ENCODE measurements at regions of chr11 and their contacts with region 1.

Region 1: GRCh38 chr11:506238-506994 is 626 bp downstream of the RNH1 start:
- DNase-seq: peak; percentile 95 to 98 (median 97)
- ATAC-seq: peak; percentile 79
- H3K4me3 ChIP-seq: peak overlapping the region; percentile 99
- H3K4me3 Mint-ChIP-seq: peak overlapping the region; percentile 93 to 99 (median 96)
- H3K27ac ChIP-seq: peak overlapping the region; percentile 99
- H3K27ac Mint-ChIP-seq: peak overlapping the region; percentile 98 to 100 (median 99)
- H3K4me1 ChIP-seq: peaks cover 12 to 26% of the 10 kb centered on the region in 2 donors
- H3K4me1 Mint-ChIP-seq: peaks cover 5 to 34% (median 21%) of the 10 kb centered on the region in 7 donors
- H3K27me3 ChIP-seq: no peaks in the 10 kb centered on the region
- H3K27me3 Mint-ChIP-seq: no peaks in the 10 kb centered on the region

Region 2: GRCh38 chr11:249062-249461 is 257.4 kb before region 1 on chr11:
- CTCF ChIA-PET with region 1: no interaction called
- POLR2A ChIA-PET with region 1: no interaction called
- intact Hi-C with region 1: no loop called
- DNase-seq: no peak
- ATAC-seq: no peak
- H3K4me3 ChIP-seq: no peak overlapping the region
- H3K4me3 Mint-ChIP-seq: peak overlapping the region in 1 of 10 donors; percentile 39
- H3K27ac ChIP-seq: peak overlapping the region; percentile 24
- H3K27ac Mint-ChIP-seq: peak overlapping the region in 3 of 9 donors; percentile 31 to 89 (median 70)
- H3K4me1 ChIP-seq: peaks cover 0 to 3% of the 10 kb centered on the region in 2 donors
- H3K4me1 Mint-ChIP-seq: peaks cover 13 to 19% (median 15%) of the 10 kb centered on the region in 7 donors
- H3K27me3 ChIP-seq: no peaks in the 10 kb centered on the region
- H3K27me3 Mint-ChIP-seq: no peaks in the 10 kb centered on the region

Region 3: DNA sequence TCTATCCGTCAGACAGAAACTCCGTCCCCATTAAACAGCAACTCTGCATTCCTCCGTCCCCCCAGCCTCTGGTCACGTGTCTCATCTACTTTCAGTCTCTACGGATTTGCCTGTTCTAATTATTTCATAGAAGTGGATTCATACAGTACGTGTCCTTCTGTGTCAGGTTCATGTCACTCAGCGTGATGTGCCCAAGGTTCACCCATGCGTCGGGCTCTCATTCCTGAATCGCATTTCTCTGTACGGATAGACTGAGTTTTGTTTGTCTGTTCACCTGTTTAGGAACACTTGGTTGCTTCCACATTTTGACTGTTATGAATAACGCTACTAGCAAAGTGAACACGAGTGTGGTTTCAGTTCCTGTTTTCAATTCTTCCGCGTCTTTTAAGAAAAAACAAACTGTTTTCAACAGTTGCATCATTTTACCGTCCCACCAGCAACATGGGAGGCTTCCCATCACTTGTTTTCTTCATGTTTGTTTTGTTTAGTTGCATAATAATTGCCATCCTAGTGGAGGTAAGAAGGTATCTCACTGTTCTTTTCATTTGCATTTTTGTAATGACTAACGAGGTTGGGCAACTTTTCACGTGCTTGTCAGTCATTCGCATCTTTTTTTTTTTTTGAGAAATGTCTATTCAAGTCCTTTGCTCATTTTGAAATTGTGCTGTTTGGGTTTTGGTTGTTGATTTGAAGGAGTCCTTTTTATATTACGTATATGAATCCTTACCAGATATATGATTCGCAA is 237.1 kb before region 1 on chr11:
- CTCF ChIA-PET with region 1: no interaction called
- POLR2A ChIA-PET with region 1: interaction called, 6 read pairs
- intact Hi-C with region 1: loop called in 1 of 2 experiments (anchors 1 kb)
- DNase-seq: peak; percentile 43 to 95 (median 88)
- ATAC-seq: peak; percentile 84
- H3K4me3 ChIP-seq: peak overlapping the region; percentile 59
- H3K4me3 Mint-ChIP-seq: peak overlapping the region; percentile 85 to 96 (median 90)
- H3K27ac ChIP-seq: peak overlapping the region; percentile 80
- H3K27ac Mint-ChIP-seq: peak overlapping the region; percentile 92 to 100 (median 99)
- H3K4me1 ChIP-seq: peaks cover 24 to 26% of the 10 kb centered on the region in 2 donors
- H3K4me1 Mint-ChIP-seq: peaks cover 20 to 47% (median 35%) of the 10 kb centered on the region in 7 donors
- H3K27me3 ChIP-seq: no peaks in the 10 kb centered on the region
- H3K27me3 Mint-ChIP-seq: peaks cover 0 to 8% (median 0%) of the 10 kb centered on the region in 5 donors

Region 4: DNA sequence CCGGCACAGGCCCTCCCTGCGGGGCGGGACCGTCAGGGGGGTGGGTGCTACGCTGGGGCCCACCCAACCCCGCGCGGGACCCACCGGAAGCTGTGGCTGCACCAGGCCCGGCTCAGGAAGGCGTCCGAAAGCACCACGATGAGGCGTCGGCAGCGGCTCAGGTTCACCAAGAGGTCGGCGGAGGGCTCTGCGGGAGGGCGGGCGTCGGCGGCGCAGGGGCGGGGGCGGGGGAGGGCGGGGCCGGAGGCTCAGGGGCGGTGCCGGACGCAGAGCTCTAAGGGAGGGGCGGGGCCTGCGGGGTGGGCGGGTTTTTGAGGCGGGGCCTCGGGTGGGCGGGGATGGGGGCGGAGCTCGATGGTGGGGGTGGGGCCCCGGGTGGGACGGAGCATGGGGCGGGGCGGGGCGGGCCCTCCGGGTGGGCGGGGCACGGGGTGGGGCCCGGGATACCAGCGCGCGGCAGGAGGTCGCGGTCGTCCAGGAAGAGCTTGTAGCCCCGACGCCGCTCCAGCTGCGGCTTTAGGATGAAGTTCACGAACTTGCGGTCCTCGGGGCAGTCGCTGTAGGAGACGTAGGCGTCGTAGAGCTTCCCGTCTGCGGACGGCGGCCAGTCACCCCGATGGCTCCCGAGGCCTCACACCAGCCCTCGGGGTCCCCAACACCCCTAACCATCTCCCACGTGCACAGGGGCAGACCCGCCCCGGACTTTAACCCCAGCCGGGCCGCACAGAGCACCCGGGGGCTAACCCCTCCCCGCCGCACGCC is 99.3 kb before region 1 on chr11:
- CTCF ChIA-PET with region 1: no interaction called
- POLR2A ChIA-PET with region 1: interaction called, 9 read pairs
- intact Hi-C with region 1: loop called (anchors 1 kb)
- DNase-seq: peak; percentile 80 to 93 (median 92)
- ATAC-seq: peak; percentile 90
- H3K4me3 ChIP-seq: no peak overlapping the region
- H3K4me3 Mint-ChIP-seq: peak overlapping the region in 6 of 10 donors; percentile 12 to 60 (median 38)
- H3K27ac ChIP-seq: peak overlapping the region; percentile 75
- H3K27ac Mint-ChIP-seq: peak overlapping the region in 7 of 9 donors; percentile 21 to 85 (median 51)
- H3K4me1 ChIP-seq: peaks cover 9 to 13% of the 10 kb centered on the region in 2 donors
- H3K4me1 Mint-ChIP-seq: peaks cover 4 to 21% (median 6%) of the 10 kb centered on the region in 7 donors
- H3K27me3 ChIP-seq: no peaks in the 10 kb centered on the region
- H3K27me3 Mint-ChIP-seq: no peaks in the 10 kb centered on the region

Region 5: DNA sequence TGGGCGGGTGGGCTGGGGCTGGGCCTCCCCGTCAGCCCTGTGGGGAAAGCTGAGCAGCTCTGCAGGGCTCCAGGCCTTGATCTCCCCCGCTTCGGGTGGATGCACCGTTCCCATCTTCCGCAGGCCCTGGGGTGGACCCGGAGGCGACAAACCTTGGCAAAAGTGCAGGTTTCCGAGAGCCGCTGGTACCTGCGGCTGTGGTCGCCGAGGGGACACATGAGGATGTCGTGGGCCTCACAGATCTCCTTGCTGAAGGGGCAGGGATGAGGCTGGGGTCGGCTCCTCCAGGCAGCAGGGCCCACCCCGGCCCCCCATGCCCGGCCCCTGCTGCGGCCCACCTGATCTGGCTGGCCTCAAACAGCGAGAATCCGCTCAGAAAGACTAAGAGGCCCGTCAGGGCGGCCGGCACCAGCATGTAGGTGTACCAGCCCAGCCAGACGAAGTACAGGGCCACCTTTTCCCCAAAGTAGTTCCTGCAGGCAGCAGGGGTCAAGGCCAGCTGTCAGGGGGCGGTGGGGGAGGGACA is 76.4 kb before region 1 on chr11:
- CTCF ChIA-PET with region 1: no interaction called
- POLR2A ChIA-PET with region 1: no interaction called
- intact Hi-C with region 1: no loop called
- DNase-seq: peak in 1 of 9 donors; percentile 7
- ATAC-seq: no peak
- H3K4me3 ChIP-seq: no peak overlapping the region
- H3K4me3 Mint-ChIP-seq: no peak overlapping the region
- H3K27ac ChIP-seq: no peak overlapping the region
- H3K27ac Mint-ChIP-seq: no peak overlapping the region
- H3K4me1 ChIP-seq: no peaks in the 10 kb centered on the region
- H3K4me1 Mint-ChIP-seq: no peaks in the 10 kb centered on the region
- H3K27me3 ChIP-seq: no peaks in the 10 kb centered on the region
- H3K27me3 Mint-ChIP-seq: no peaks in the 10 kb centered on the region

Region 6: DNA sequence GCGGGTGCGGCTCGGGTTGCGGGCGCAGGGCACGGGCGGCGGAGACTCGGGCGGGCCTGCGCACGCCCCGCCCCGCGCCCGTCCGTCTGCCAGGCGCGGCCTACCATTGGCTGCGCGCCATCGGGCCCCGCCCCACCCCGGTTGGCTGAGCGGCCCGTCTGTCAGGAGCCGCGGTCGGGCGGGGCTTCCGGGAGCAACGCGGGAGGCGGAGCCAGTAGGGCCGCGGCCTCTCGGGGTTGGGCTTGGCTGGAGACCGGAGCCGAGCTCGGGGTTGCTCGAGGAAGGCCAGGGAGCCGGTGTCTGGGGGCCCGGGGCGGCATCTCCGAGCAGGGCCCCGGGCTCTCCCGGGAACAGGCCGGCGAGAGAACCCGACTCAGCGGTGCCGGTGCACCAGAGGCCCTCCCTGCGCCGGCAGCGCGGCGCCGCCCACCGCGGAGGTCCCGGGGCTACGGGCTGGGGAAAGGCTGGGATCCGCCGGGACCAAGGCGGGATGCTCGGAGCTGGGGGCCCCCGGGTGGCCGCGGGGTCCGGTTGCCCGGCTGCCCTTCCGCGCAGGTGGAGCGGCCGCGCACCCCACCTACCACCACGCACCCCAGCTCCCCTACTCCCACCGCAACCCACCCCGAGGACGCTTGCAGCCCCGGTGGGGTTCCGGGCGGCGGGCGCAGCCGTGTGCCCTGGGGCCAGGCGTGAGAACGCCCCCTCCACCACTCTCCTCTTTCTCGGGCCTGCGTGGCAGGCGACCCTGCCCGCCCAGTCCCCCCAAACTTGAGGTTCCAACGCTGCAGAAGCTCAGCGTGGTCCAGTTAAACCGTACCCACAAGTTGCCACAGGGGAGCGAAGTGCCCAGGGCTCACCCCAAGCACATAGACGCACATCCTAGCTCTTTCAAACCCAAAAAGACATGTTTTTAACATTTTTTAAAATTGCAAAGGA is 29.4 kb after region 1 on chr11 and contains the start of gene HRAS:
- CTCF ChIA-PET with region 1: no interaction called
- POLR2A ChIA-PET with region 1: interaction called, 26 read pairs
- intact Hi-C with region 1: loop called (anchors 1 kb)
- DNase-seq: peak; percentile 92 to 99 (median 96)
- ATAC-seq: peak; percentile 93
- H3K4me3 ChIP-seq: peak within 1 kb of the TSS; percentile 66
- H3K4me3 Mint-ChIP-seq: peak within 1 kb of the TSS; percentile 87 to 97 (median 91)
- H3K27ac ChIP-seq: peak within 1 kb of the TSS; percentile 75
- H3K27ac Mint-ChIP-seq: peak within 1 kb of the TSS; percentile 84 to 96 (median 91)
- H3K4me1 ChIP-seq: peaks cover 20 to 21% of the 10 kb centered on the region in 2 donors
- H3K4me1 Mint-ChIP-seq: peaks cover 5 to 16% (median 11%) of the 10 kb centered on the region in 7 donors
- H3K27me3 ChIP-seq: no peaks in the 10 kb centered on the region
- H3K27me3 Mint-ChIP-seq: no peaks in the 10 kb centered on the region
- total RNA-seq, gene HRAS: 22.3 to 52.0 (median 31.9) TPM

Region 7: DNA sequence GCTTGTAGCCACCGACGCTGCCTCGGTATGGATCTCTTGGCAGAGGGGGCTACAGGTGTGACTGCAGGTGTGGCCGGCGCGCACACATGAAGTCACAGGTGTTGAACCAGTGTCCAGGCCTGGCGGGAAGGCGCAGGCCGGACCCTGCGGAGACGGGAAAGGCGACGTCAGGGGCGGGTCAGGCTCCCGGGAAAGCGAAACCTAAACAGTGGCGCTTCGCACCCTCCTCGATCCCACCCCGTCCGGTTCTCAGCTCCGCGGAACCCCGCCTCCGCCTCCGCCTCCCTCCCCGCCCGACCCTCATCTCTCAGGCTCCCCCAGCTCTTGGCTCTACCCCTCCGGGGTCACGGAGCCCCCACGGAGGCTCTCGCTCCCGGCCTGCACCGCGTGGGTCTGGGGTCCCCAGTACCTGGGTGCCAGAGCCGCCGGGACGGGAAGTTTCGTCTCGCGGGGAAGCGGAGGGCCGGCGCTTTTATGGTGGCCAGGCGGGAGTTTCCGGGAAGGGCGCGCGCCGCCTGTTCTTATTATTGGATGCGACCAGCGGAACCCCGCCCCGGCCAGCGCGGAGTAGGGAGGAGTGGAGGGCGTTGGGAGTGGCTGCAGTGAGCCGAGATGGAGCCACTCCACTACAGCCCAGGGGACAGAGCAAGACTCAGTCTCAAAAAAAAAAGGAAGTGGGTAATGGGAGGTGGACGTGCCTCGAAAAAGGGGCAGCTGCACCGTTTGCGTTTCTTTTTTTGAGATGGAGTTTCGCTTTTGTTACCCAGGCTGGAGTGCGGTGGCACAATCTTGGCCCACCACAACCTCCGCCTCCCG is 109.3 kb after region 1 on chr11 and contains the start of gene IRF7:
- CTCF ChIA-PET with region 1: no interaction called
- POLR2A ChIA-PET with region 1: interaction called, 6 read pairs
- intact Hi-C with region 1: loop called (anchors 1 kb)
- DNase-seq: peak; percentile 70 to 91 (median 76)
- ATAC-seq: peak; percentile 91
- H3K4me3 ChIP-seq: peak within 1 kb of the TSS; percentile 97
- H3K4me3 Mint-ChIP-seq: peak within 1 kb of the TSS; percentile 80 to 94 (median 92)
- H3K27ac ChIP-seq: peak within 1 kb of the TSS; percentile 95
- H3K27ac Mint-ChIP-seq: peak within 1 kb of the TSS; percentile 83 to 97 (median 93)
- H3K4me1 ChIP-seq: peaks cover 8 to 22% of the 10 kb centered on the region in 2 donors
- H3K4me1 Mint-ChIP-seq: peaks cover 0 to 22% (median 15%) of the 10 kb centered on the region in 7 donors
- H3K27me3 ChIP-seq: no peaks in the 10 kb centered on the region
- H3K27me3 Mint-ChIP-seq: no peaks in the 10 kb centered on the region
- total RNA-seq, gene IRF7: 57.0 to 134 (median 64.6) TPM

Region 8: DNA sequence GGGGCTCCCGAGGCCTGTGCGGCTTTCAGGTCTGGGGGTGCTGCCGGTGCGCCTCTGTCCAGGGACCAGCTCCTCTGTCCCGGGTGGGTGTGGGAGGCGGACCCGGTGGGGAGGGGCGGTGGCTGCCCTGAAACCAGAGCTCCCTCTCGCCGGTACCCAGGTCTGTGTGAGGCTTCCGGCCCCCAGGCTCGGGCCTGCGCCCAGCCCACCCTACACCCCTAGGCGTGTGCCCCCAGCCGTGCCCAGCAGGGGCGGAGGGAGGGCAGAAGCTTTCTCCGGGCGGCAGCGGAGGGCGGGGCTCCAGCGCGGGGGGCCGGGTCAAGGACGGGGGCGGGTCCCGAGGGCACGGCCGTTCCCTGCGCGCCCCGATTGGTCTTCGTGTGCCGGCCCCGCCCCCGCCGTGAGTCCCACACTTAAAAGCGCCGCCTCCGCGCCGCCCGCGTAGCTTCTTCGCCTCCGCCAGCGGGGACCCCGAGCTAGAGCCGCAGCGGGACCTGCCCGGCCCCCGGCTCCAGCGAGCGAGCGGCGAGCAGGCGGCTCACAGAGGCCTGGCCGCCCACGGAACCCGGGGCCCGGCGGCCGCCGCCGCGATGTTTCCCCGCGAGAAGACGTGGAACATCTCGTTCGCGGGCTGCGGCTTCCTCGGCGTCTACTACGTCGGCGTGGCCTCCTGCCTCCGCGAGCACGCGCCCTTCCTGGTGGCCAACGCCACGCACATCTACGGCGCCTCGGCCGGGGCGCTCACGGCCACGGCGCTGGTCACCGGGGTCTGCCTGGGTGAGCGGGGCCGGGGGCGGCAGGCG is 312.9 kb after region 1 on chr11:
- CTCF ChIA-PET with region 1: no interaction called
- POLR2A ChIA-PET with region 1: interaction called, 4 read pairs
- intact Hi-C with region 1: loop called in 1 of 2 experiments (anchors 1 kb)
- DNase-seq: peak; percentile 85 to 95 (median 92)
- ATAC-seq: peak; percentile 86
- H3K4me3 ChIP-seq: peak overlapping the region; percentile 86
- H3K4me3 Mint-ChIP-seq: peak overlapping the region; percentile 82 to 92 (median 86)
- H3K27ac ChIP-seq: peak overlapping the region; percentile 91
- H3K27ac Mint-ChIP-seq: peak overlapping the region in 7 of 9 donors; percentile 67 to 93 (median 86)
- H3K4me1 ChIP-seq: peaks cover 12 to 15% of the 10 kb centered on the region in 2 donors
- H3K4me1 Mint-ChIP-seq: peaks cover 0 to 24% (median 13%) of the 10 kb centered on the region in 7 donors
- H3K27me3 ChIP-seq: no peaks in the 10 kb centered on the region
- H3K27me3 Mint-ChIP-seq: no peaks in the 10 kb centered on the region

Region 9: GRCh38 chr11:1515082-1516060 is 1009.0 kb after region 1 on chr11:
- CTCF ChIA-PET with region 1: no interaction called
- POLR2A ChIA-PET with region 1: no interaction called
- intact Hi-C with region 1: no loop called
- DNase-seq: peak; percentile 37 to 79 (median 61)
- ATAC-seq: peak; percentile 86
- H3K4me3 ChIP-seq: no peak overlapping the region
- H3K4me3 Mint-ChIP-seq: peak overlapping the region in 4 of 10 donors; percentile 14 to 41 (median 34)
- H3K27ac ChIP-seq: no peak overlapping the region
- H3K27ac Mint-ChIP-seq: peak overlapping the region in 3 of 9 donors; percentile 28 to 59 (median 28)
- H3K4me1 ChIP-seq: peaks cover 19 to 20% of the 10 kb centered on the region in 2 donors
- H3K4me1 Mint-ChIP-seq: peaks cover 9 to 88% (median 67%) of the 10 kb centered on the region in 7 donors
- H3K27me3 ChIP-seq: no peaks in the 10 kb centered on the region
- H3K27me3 Mint-ChIP-seq: no peaks in the 10 kb centered on the region